Esophagus muscularis mucosa (tissue), 4 donors: ENCODE measurements at regions of chr15 and their contacts with region 1.

Region 1: DNA sequence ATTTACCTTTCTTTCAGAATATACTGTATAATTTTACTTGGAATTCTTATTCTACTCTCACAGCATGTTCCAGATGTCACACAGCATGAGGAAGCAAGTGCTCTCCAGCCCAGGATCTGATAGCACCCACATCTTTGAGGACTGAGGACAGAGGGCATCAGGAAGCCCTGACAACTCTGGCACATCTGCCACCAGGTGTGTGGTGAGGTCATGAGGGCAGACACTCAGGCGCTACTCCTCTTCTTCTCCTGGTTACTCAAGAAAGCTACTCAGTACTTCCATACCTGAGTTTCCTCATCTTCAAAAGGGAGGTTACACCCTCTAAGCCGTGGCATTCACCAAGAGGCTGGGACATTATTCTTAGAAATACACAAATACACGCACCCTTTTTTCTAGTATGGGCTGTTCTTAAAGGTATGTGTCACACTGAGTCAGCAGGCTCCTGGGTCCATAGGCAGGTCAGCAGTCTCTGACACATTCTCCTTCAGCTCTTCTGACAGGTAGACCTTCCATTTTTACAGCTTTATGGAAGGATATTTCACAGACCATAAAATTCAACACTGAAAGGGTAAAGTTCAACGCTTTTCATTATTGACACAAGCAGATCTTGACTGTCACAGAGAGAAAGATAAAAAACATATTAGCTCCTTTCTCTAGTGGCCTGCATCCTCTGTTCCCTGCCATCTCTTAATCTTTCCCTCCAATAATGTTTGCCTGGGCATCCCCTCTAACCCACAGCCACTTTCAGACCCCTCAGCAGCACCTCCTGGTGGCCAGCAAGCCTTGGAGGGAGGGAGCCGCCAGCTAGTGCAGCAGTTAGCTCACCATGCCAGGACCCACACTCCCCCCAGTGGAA is 103.2 kb upstream of the TJP1 start:
- DNase-seq: no peak
- H3K4me3 ChIP-seq: no peak overlapping the region
- H3K27ac ChIP-seq: no peak overlapping the region
- H3K4me1 ChIP-seq: peaks cover 0 to 14% (median 0%) of the 10 kb centered on the region in 4 donors
- H3K27me3 ChIP-seq: peaks cover 0 to 11% (median 0%) of the 10 kb centered on the region in 4 donors
- CTCF ChIP-seq: peak; percentile 57 to 70 (median 59)
- EP300 ChIP-seq: no peak
- POLR2A ChIP-seq: no peak

Region 2: DNA sequence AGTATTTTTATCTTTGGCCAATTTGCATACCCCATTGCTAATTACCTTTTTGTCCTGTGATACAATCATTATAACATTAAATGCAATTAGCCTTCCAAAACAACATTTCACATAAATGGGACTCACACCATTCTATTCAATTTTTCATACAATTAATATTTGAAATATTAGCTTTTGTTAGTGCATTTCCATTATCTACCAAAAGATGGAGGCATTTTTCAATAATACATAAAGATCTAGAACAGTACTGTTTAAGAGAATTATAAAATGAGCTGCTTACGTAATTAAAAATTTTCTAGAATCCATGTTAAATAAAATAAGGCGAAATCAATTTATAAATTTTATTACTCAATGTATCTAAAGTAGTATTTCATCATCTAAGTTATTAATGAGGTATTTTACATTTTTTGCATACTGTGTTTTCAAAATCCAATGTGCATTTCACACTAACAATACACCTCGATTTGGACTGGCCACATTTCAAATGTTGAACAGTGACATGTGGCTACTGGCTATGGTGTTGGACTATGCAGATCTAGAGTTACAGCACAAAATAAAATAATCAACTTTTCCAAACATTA is 177.5 kb before region 1 on chr15:
- intact Hi-C with region 1: loop called (anchors 5 kb)
- DNase-seq: no peak
- H3K4me3 ChIP-seq: no peak overlapping the region
- H3K27ac ChIP-seq: no peak overlapping the region
- H3K4me1 ChIP-seq: peaks cover 0 to 6% (median 0%) of the 10 kb centered on the region in 4 donors
- H3K27me3 ChIP-seq: no peaks in the 10 kb centered on the region
- CTCF ChIP-seq: peak; percentile 39 to 54 (median 50)
- EP300 ChIP-seq: no peak
- POLR2A ChIP-seq: no peak

Region 3: GRCh38 chr15:29815000-29815710 is 110.3 kb before region 1 on chr15:
- intact Hi-C with region 1: loop called (anchors 10 kb)
- DNase-seq: no peak
- H3K4me3 ChIP-seq: no peak overlapping the region
- H3K27ac ChIP-seq: peak overlapping the region in 2 of 4 donors; percentile 29 to 34
- H3K4me1 ChIP-seq: peaks cover 56 to 76% (median 65%) of the 10 kb centered on the region in 4 donors
- H3K27me3 ChIP-seq: no peaks in the 10 kb centered on the region
- CTCF ChIP-seq: no peak
- EP300 ChIP-seq: no peak
- POLR2A ChIP-seq: no peak

Region 4: DNA sequence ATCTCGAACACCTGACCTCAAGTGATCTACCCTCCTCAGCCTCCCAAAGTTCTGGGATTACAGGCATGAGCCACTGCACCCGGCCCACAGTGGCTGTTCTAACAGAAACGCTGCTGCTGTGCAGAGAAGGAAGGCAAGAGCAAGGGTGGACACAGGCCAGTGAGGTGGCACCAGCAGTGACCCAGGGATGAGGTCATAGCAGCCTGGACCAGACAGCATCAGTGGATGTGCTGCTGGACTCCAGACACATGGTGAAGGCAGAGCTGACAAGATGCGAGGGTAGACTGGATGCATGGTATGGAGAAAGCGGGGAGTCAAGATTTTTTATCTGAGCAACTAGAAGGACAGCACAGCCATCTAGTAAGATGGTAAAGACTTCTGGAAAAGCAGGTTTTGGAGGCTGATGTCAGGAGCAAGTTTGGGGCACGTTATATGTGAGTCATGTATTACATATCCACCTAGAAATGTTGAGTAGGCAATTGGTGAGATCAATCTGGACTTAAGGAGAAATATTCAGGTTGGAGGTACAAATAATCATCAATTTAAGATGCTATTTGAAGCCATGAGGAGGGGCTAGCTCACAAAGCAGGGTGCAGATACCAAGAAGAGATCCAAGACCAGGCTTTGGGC is 81.1 kb before region 1 on chr15:
- intact Hi-C with region 1: no loop called
- DNase-seq: no peak
- H3K4me3 ChIP-seq: no peak overlapping the region
- H3K27ac ChIP-seq: no peak overlapping the region
- H3K4me1 ChIP-seq: peaks cover 8 to 12% (median 10%) of the 10 kb centered on the region in 4 donors
- H3K27me3 ChIP-seq: no peaks in the 10 kb centered on the region
- CTCF ChIP-seq: no peak
- EP300 ChIP-seq: no peak
- POLR2A ChIP-seq: no peak

Region 5: DNA sequence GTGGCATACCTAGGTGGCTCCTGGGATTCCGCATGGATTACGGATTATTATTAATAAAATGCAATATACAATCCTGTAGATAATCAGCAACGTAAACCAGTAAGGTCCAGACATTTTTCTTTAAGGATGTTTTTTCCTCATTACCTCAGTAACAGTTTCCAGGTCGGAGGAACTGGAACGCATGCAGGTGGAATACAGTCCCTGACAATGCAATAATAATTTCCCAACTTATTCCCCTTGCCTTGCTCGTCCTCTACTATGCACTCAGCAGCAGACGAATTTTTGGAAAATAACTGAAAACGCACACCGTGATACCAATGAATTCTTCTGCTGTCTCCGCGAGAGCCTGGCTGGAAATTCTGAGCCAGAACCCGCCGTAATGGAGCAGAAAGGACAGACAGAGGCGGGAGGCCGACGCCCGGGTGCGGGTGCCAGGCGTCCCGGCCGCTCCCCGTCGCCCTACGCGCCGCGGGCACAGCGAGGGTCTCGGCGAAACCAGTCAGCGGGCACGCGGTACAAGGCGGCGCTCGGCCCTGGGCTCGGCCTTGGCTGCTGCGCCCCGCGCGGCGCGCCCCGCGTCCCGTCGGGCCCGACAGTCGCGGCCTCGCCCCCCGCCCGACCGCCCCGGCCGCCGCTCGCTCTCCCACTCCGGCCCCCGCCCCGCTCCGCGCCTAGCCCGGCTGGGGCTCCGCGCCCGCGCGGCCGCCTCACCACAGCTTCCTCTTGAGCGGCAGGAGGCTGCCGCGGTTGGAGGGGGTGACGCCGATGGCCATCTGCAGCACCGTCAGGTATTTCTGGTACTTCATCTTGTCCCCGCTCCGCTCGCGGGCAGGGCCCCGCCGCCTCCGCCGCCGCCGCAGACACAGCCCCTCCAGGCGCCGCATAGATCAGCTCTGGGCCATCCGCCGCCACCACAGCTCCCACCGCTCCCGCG is 42.8 kb after region 1 on chr15:
- intact Hi-C with region 1: no loop called
- DNase-seq: no peak
- H3K4me3 ChIP-seq: peak overlapping the region; percentile 42 to 61 (median 48)
- H3K27ac ChIP-seq: no peak overlapping the region
- H3K4me1 ChIP-seq: peaks cover 0 to 9% (median 3%) of the 10 kb centered on the region in 4 donors
- H3K27me3 ChIP-seq: peaks cover 0 to 53% (median 6%) of the 10 kb centered on the region in 4 donors
- CTCF ChIP-seq: no peak
- EP300 ChIP-seq: no peak
- POLR2A ChIP-seq: no peak